ENCODE measurements at regions of chr11 and their contacts with region 1.

Region 1: GRCh38 chr11:95074806-95075563 is 8.3 kb downstream of the SRSF8 start:
- DNase-seq: peak; percentile 63 to 92
- ATAC-seq: peak; percentile 93 to 99 (median 96)
- H3K4me3 ChIP-seq: no peak overlapping the region
- H3K27ac ChIP-seq: peak overlapping the region; percentile 6
- H3K4me1 ChIP-seq: peaks cover 14% of the 10 kb centered on the region
- H3K27me3 ChIP-seq: no peaks in the 10 kb centered on the region
- CTCF ChIP-seq: no peak

Region 2: GRCh38 chr11:95089620-95090542 is 14.9 kb after region 1 on chr11 and contains the start of gene ENDOD1:
- intact Hi-C with region 1: loop called in 1 of 2 experiments (anchors 2 kb)
- DNase-seq: peak; percentile 86 to 92
- ATAC-seq: peak; percentile 92 to 95 (median 94)
- H3K4me3 ChIP-seq: peak within 1 kb of the TSS; percentile 78
- H3K27ac ChIP-seq: peak within 1 kb of the TSS; percentile 90
- H3K4me1 ChIP-seq: peaks cover 49% of the 10 kb centered on the region
- H3K27me3 ChIP-seq: no peaks in the 10 kb centered on the region
- CTCF ChIP-seq: no peak
- total RNA-seq, gene ENDOD1: 29.0 to 55.3 (median 41.3) TPM

Region 3: DNA sequence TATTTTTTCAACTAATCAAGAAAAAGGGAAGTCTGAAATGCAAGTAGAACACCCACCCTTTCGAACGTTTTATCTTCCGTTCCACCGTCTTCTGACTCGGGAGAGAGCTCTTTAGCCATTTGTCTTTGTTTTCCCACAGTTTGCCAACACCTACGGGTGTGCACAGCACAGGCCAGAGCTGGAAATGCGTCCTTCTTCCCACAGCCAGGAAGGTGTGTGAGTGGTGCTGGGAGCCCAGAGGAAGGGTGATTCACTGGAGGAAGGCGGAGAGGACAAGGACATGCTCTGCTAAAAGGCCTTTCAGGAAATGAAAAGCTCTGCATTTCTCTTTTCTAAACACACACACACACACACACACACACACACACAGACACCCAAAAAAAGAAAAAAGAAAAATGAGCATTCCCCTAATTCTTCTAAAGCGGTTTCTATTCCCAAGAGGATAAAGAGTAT is 33.2 kb after region 1 on chr11:
- intact Hi-C with region 1: loop called in 1 of 2 experiments (anchors 5 kb)
- DNase-seq: peak; percentile 54 to 65
- ATAC-seq: peak; percentile 72 to 88 (median 86)
- H3K4me3 ChIP-seq: peak overlapping the region; percentile 58
- H3K27ac ChIP-seq: peak overlapping the region; percentile 94
- H3K4me1 ChIP-seq: peaks cover 89% of the 10 kb centered on the region
- H3K27me3 ChIP-seq: no peaks in the 10 kb centered on the region
- CTCF ChIP-seq: no peak

Region 4: DNA sequence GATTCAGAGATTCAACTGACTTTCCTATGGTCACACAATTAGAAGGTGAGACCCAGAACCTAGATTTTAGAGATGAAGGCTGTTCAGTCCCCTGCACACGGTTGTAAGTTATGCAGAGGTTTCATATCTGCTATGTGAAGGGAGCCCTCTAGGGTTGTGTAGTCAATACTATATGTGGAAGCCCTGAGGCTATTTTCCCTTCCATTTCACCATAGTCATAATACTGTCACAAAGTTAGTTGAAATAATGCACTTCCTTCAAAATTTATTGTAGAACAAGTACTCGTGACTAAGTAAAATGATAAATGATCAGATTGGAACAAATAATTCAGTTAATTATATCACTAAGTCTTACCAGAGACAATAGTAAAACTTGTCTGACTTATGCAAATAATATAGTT is 63.5 kb after region 1 on chr11:
- intact Hi-C with region 1: loop called in 1 of 2 experiments (anchors 5 kb)
- DNase-seq: no peak
- ATAC-seq: peak; percentile 77 to 94 (median 84)
- H3K4me3 ChIP-seq: no peak overlapping the region
- H3K27ac ChIP-seq: no peak overlapping the region
- H3K4me1 ChIP-seq: peaks cover 7% of the 10 kb centered on the region
- H3K27me3 ChIP-seq: no peaks in the 10 kb centered on the region
- CTCF ChIP-seq: peak; percentile 40

Measured in psoas muscle (tissue), 8 donors.